PC-3 (cell line): ENCODE measurements at regions of chr7 and their contacts with region 1.

Region 1: GRCh38 chr7:91880413-91881241 is at the start of gene MTERF1:
- DNase-seq: peak; percentile 93
- ATAC-seq: peak; percentile 94
- H3K4me3 ChIP-seq: peak within 1 kb of the TSS; percentile 91
- H3K27ac ChIP-seq: peak within 1 kb of the TSS; percentile 1; the same call in 1 of the 2 replicates
- H3K4me1 ChIP-seq: peaks cover 7% of the 10 kb centered on the region; the same call in 1 of the 2 replicates
- H3K27me3 ChIP-seq: no peaks in the 10 kb centered on the region
- CTCF ChIP-seq: peak; percentile 99
- total RNA-seq, gene MTERF1: 4.0 and 10.0 TPM in 2 replicates

Region 2: GRCh38 chr7:91457208-91457607 is 423.4 kb before region 1 on chr7:
- CTCF ChIA-PET with region 1: no interaction called
- POLR2A ChIA-PET with region 1: no interaction called
- intact Hi-C with region 1: no loop called
- DNase-seq: no peak
- ATAC-seq: no peak
- H3K4me3 ChIP-seq: no peak overlapping the region
- H3K27ac ChIP-seq: no peak overlapping the region
- H3K4me1 ChIP-seq: no peaks in the 10 kb centered on the region
- H3K27me3 ChIP-seq: no peaks in the 10 kb centered on the region
- CTCF ChIP-seq: no peak

Region 3: GRCh38 chr7:91826377-91826776 is 54.2 kb before region 1 on chr7:
- CTCF ChIA-PET with region 1: interaction called, 9 read pairs
- POLR2A ChIA-PET with region 1: no interaction called
- intact Hi-C with region 1: loop called (anchors 1 kb)
- DNase-seq: peak; percentile 57
- ATAC-seq: peak; percentile 79
- H3K4me3 ChIP-seq: no peak overlapping the region
- H3K27ac ChIP-seq: no peak overlapping the region
- H3K4me1 ChIP-seq: peaks cover 7% of the 10 kb centered on the region; the same call in 1 of the 2 replicates
- H3K27me3 ChIP-seq: no peaks in the 10 kb centered on the region
- CTCF ChIP-seq: no peak

Region 4: DNA sequence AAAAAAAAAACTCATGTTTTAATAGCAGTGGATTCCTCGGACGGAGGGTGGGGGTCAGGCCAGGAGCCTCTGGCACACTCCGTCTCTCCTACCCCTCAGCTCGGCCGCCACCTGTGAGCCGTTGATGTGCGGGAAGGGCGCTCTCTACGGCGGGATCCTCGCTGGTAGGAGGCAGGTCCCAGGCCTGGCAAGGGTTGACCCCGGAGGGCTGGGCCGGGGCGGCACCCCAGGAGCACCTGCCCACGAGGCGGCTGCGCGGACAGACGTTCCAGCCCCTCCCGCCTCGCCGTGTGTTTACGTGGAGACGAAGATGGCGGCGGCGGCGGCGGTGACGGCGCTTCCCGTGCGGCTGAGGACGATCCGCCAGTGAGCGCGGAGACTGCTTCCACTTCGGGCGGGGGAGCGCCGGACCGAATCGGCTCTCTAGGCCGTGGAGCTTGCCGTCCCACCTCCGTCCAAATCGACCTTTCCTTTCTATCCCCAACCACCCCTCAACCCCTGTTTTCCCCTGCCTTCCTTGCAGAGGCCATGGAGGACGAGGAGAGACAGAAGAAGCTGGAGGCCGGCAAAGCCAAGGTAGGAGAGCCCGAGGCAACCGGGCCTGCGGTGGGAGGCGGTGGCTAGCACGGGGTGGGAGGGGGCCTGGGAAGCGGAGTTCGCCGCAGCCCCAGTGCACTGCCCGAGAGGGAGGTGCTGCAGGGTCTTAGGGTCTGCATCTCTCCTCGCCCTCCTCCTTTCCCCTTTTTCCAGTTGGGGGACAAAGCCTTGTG is 60.1 kb after region 1 on chr7 and contains the start of gene AKAP9:
- CTCF ChIA-PET with region 1: interaction called, 12 read pairs
- POLR2A ChIA-PET with region 1: no interaction called
- intact Hi-C with region 1: loop called (anchors 1 kb)
- DNase-seq: peak; percentile 81
- ATAC-seq: peak; percentile 94
- H3K4me3 ChIP-seq: peak within 1 kb of the TSS; percentile 76
- H3K27ac ChIP-seq: peak within 1 kb of the TSS; percentile 58
- H3K4me1 ChIP-seq: peaks cover 22% of the 10 kb centered on the region
- H3K27me3 ChIP-seq: no peaks in the 10 kb centered on the region
- CTCF ChIP-seq: no peak
- total RNA-seq, gene AKAP9: 23.9 and 24.9 TPM in 2 replicates

Region 5: GRCh38 chr7:91953618-91954017 is 73.0 kb after region 1 on chr7:
- CTCF ChIA-PET with region 1: interaction called, 6 read pairs
- POLR2A ChIA-PET with region 1: no interaction called
- intact Hi-C with region 1: loop called (anchors 1 kb)
- DNase-seq: peak; percentile 18
- ATAC-seq: no peak
- H3K4me3 ChIP-seq: no peak overlapping the region
- H3K27ac ChIP-seq: no peak overlapping the region
- H3K4me1 ChIP-seq: peaks cover 14% of the 10 kb centered on the region
- H3K27me3 ChIP-seq: no peaks in the 10 kb centered on the region
- CTCF ChIP-seq: peak; percentile 66

Region 6: DNA sequence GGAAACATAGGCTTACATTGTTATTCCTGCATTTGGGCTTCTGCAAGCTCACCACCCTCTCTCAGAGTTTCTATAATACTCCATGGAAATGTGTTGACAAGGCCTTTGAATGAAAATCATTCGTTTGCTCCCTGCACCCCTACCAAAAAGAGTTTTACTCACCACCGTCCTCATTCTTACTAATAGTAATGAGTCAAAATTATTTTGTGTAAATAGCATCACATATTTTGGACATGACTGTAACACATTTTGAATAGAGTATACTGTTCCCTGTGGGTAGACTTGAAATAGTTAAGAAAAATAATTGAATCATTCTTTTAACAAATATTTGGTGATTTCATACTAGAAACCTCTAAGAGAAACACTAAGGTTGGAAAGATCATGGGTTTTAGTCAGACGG is 144.6 kb after region 1 on chr7:
- CTCF ChIA-PET with region 1: no interaction called
- POLR2A ChIA-PET with region 1: no interaction called
- intact Hi-C with region 1: loop called (anchors 1 kb)
- DNase-seq: peak; percentile 89
- ATAC-seq: peak; percentile 98
- H3K4me3 ChIP-seq: peak overlapping the region; percentile 5; the same call in 1 of the 2 replicates
- H3K27ac ChIP-seq: peak overlapping the region; percentile 80
- H3K4me1 ChIP-seq: peaks cover 36% of the 10 kb centered on the region
- H3K27me3 ChIP-seq: no peaks in the 10 kb centered on the region
- CTCF ChIP-seq: no peak

Region 7: GRCh38 chr7:92043637-92044036 is 163.0 kb after region 1 on chr7:
- CTCF ChIA-PET with region 1: no interaction called
- POLR2A ChIA-PET with region 1: no interaction called
- intact Hi-C with region 1: loop called (anchors 1 kb)
- DNase-seq: no peak
- ATAC-seq: no peak
- H3K4me3 ChIP-seq: no peak overlapping the region
- H3K27ac ChIP-seq: no peak overlapping the region
- H3K4me1 ChIP-seq: no peaks in the 10 kb centered on the region
- H3K27me3 ChIP-seq: no peaks in the 10 kb centered on the region
- CTCF ChIP-seq: no peak